ENCODE measurements at regions of chr7 and their contacts with region 1.

Region 1: GRCh38 chr7:41940760-41941343 is 238.0 kb upstream of the INHBA start:
- DNase-seq: no peak
- H3K4me3 ChIP-seq: no peak overlapping the region
- CTCF ChIP-seq: peak; percentile 83

Region 2: DNA sequence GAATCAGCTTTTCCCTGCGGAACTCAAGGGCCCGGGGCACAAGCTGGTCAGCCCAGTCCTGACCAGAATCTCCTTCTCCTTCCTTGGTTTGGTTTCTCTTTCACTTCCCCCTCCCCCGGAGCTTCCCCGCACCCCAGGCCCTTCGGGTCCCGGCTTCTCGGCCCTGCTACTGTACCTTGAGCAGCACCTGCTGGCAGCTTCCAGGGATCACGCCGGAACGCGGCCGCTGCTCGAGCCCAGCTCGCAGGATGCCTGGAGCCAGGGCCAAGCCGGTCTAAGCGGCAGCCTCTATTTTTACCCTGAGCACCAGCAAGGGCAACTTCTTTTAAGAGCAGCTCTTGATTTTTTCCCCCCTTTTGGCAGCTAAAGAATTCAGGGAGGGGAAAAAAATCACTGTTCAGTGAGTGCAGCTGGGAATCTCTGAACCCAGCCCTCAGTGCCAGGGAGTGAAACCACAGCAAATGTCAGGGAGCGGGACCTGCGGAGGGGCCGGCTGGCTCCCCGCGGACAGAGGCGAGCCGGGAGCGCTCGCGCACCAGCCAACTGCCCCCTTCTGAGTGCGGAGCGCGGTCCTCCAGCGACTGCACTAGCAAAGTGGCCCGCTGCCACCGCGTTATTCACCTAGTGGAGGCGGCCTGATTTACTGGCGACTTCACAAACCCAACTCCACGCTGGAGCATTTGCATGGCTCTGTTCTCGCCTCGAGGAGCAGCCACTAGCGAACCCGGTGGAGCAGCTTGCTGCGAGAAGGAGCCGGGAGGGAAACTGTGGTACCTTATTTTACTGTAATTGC is 235.5 kb before region 1 on chr7:
- CTCF ChIA-PET with region 1: interaction called, 27 read pairs
- POLR2A ChIA-PET with region 1: no interaction called
- DNase-seq: peak; percentile 68
- H3K4me3 ChIP-seq: peak overlapping the region; percentile 69
- CTCF ChIP-seq: peak; percentile 94

Region 3: GRCh38 chr7:41921453-41921981 is 19.3 kb before region 1 on chr7:
- CTCF ChIA-PET with region 1: interaction called, 161 read pairs
- POLR2A ChIA-PET with region 1: no interaction called
- DNase-seq: peak; percentile 58
- H3K4me3 ChIP-seq: no peak overlapping the region
- CTCF ChIP-seq: no peak

Region 4: DNA sequence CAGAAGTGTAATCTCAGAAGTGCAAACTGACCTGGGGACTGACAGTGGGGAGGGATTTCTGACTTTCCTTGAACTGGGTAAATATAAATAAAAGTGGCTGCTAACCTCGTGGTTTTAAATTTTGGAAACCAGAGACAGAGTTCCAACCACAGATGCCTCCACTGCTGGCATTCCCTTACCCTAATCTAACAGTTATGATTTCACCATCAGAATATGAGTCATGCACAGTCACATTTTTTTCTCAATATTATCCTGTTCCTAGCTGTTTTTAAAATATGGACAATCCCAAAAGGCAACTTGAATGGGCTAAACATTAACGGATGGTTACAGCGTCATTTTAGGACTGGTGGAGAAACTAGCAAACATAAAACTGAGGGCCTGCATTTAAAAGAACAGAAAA is 26.3 kb after region 1 on chr7:
- CTCF ChIA-PET with region 1: interaction called, 112 read pairs
- POLR2A ChIA-PET with region 1: interaction called, 3 read pairs
- DNase-seq: no peak
- H3K4me3 ChIP-seq: no peak overlapping the region
- CTCF ChIP-seq: no peak

Region 5: DNA sequence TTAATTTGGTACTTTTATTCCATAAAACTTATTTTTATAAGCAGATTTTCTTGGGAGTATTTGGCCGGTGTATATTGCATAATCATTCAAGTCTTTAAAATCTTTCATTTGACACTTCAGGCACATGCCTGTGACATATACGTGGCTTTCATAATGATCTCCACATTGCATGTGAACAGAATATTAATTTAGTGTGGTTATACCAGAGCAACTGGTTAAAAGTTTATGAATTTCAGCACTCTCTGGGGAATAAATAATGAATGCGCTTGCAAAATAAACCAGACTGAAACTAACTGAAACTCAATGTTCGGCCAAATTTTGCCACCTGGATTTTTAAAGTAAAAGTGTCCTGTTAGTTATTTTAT is 53.9 kb after region 1 on chr7:
- CTCF ChIA-PET with region 1: no interaction called
- POLR2A ChIA-PET with region 1: no interaction called
- DNase-seq: no peak
- H3K4me3 ChIP-seq: no peak overlapping the region
- CTCF ChIP-seq: no peak

Region 6: DNA sequence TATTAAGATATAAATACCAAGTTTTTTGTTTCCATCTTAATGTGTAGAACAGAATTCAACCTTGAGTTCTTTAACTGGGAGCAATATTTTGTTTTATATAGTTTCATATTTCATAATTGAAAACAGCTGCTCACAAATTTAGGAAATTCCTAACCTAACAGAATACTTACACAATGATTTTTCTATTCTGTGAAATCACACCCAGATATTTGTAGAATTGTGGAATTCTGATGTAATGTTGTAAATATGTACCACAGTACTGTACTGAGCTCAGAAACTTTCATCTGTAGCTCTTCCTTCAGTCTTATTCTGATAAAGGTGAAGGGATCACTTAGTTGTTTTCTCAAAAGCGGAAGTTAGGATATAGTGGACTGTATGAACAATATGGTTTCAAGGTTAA is 439.5 kb after region 1 on chr7:
- CTCF ChIA-PET with region 1: no interaction called
- POLR2A ChIA-PET with region 1: no interaction called
- DNase-seq: no peak
- H3K4me3 ChIP-seq: no peak overlapping the region
- CTCF ChIP-seq: no peak

Region 7: GRCh38 chr7:42690794-42691639 is 750.2 kb after region 1 on chr7:
- CTCF ChIA-PET with region 1: interaction called, 59 read pairs
- POLR2A ChIA-PET with region 1: no interaction called
- DNase-seq: no peak
- H3K4me3 ChIP-seq: no peak overlapping the region
- CTCF ChIP-seq: peak; percentile 59

Region 8: DNA sequence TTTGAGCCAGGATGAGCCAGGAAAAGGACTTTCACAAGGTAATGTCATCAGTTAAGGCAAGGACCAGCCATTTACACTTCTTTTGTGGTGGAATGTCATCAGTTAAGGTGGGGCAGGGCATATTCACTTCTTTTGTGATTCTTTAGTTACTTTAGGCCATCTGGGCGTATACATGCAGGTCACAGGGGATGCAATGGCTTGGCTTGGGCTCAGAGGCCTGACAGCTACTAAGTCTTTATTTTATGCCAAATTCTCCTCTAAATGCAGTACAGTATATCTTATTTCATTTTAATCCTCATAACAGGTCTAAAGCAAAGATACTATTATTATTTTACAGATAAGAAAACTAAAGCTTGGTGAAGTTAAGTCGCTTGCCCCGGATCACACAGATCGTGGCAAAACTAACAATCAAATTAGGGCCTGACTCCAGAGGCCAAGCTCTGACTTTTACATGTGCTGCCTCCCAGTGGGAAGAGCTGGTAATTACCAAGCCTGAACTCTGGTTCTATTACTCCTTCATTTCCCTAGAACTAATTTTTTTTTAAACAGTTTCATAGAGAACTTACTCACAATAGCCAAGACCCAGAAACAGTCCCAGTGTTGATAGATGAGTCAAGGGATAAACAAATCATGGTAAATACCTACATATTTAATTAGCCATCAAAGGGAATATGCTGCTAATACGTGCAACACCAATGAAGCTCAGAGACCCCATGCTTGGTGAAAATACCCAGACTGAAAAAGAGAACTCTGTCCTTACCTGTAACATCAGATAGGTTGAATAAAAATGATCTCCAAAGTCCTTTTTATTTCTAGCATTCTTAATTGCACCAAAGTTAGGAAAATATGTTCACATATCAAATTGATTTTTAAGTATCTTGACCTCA is 935.6 kb after region 1 on chr7:
- CTCF ChIA-PET with region 1: interaction called, 164 read pairs
- POLR2A ChIA-PET with region 1: no interaction called
- DNase-seq: no peak
- H3K4me3 ChIP-seq: no peak overlapping the region
- CTCF ChIP-seq: peak; percentile 72